ENCODE measurements at regions of chr6 and their contacts with region 1.

Region 1: GRCh38 chr6:116511404-116512110 is at the start of gene CALHM5:
- DNase-seq: peak; percentile 67
- H3K4me3 Mint-ChIP-seq: no peak within 1 kb of the TSS
- H3K27ac Mint-ChIP-seq: no peak within 1 kb of the TSS
- H3K4me1 Mint-ChIP-seq: peaks cover 8% of the 10 kb centered on the region
- H3K27me3 Mint-ChIP-seq: peaks cover 17% of the 10 kb centered on the region
- CTCF ChIP-seq: no peak
- total RNA-seq, gene CALHM5: 0.05 TPM in 1 of 2 replicates, not detected in the other

Region 2: DNA sequence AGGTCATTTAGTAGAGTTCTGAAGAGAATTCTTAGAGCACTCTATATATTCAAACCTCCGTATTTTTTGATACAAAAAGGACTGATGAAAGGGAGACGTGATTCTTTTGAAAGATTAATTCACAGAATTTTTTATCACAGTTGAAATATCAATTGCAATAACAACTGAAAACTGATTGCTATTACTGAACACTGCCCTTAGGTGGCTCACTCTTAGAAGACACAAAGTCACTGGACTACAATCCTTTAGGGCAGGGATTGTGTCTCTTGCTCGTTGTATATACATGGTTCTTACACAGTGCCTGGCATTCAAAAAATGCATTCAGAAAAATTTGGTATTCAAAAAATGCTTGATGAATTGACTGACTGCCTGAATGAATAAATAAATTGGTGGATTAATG is 67.5 kb before region 1 on chr6:
- CTCF ChIA-PET with region 1: interaction called, 9 read pairs
- intact Hi-C with region 1: loop called (anchors 2 kb)
- DNase-seq: peak; percentile 22
- H3K4me3 Mint-ChIP-seq: no peak overlapping the region
- H3K27ac Mint-ChIP-seq: peak overlapping the region; percentile 28
- H3K4me1 Mint-ChIP-seq: peaks cover 33% of the 10 kb centered on the region
- H3K27me3 Mint-ChIP-seq: no peaks in the 10 kb centered on the region
- CTCF ChIP-seq: no peak

Region 3: DNA sequence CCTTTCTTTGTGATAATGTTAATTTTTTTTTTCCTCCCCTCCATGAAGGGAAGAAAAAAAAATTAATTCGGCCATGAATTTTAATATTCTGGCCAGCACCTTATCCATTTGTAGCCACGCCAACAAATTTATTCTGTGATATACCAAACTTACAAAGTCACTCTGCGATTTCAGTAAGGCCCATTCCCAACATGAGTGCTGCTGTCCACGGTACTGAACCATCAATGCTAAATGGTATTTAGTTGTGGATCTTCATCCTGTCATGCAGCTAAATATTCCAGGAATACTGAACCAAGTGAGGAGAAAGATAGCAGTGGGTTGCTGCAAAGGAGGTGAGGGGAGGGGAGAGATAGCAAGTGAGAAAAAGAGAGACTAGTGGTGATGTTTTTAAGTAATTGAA is 85.3 kb after region 1 on chr6:
- CTCF ChIA-PET with region 1: no interaction called
- intact Hi-C with region 1: no loop called
- DNase-seq: no peak
- H3K4me3 Mint-ChIP-seq: no peak overlapping the region
- H3K27ac Mint-ChIP-seq: no peak overlapping the region
- H3K4me1 Mint-ChIP-seq: no peaks in the 10 kb centered on the region
- H3K27me3 Mint-ChIP-seq: no peaks in the 10 kb centered on the region
- CTCF ChIP-seq: no peak

Region 4: GRCh38 chr6:117637770-117638169 is 1126.2 kb after region 1 on chr6:
- CTCF ChIA-PET with region 1: no interaction called
- intact Hi-C with region 1: no loop called
- DNase-seq: no peak
- H3K4me3 Mint-ChIP-seq: no peak overlapping the region
- H3K27ac Mint-ChIP-seq: no peak overlapping the region
- H3K4me1 Mint-ChIP-seq: no peaks in the 10 kb centered on the region
- H3K27me3 Mint-ChIP-seq: no peaks in the 10 kb centered on the region
- CTCF ChIP-seq: no peak

Measured in Calu3 (cell line).